ENCODE measurements at regions of chr11 and their contacts with region 1.

Region 1: GRCh38 chr11:1652771-1653540 is 23.4 kb downstream of the KRTAP5-5 start:
- DNase-seq: peak; percentile 72 to 90 (median 88)
- ATAC-seq: peak; percentile 76 to 83
- H3K4me3 ChIP-seq: no peak overlapping the region
- H3K27ac ChIP-seq: no peak overlapping the region
- H3K4me1 ChIP-seq: no peaks in the 10 kb centered on the region
- H3K27me3 ChIP-seq: no peaks in the 10 kb centered on the region

Region 2: DNA sequence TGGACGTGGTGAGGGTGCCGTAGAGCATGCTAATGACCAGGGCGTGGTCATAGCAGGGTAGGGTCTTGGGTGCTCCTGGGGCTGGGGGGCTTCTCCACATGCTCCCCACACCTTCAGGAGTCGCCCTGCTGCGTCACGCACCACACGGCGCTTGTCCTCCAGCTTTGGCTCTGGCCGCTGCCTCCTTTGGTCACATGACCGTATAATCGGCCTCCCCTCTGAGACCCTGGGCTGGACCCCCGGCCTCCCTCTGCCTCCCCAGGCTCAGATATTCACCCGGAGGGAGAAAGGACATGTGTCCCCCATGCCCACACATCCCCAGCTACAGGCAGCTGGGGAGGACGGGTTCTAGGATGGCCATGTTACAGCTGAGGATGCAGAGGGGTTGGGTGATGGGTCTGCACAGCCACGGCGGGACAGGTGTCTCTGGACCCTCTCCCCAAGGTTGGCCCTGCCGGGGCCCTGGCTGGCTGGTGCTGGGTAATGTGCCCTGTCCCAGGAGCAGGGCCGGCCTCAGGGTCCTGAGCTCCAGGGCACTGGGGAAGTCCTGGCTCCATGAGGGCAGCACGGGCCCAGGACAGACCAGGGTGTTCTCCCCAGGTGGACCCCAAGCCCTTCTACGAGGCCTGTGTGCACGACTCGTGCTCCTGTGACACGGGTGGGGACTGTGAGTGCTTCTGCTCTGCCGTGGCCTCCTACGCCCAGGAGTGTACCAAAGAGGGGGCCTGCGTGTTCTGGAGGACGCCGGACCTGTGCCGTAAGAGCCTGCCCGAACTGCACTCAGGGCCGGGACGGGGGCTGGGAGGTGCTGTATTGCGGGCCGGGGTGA is 563.8 kb before region 1 on chr11:
- intact Hi-C with region 1: no loop called
- DNase-seq: peak; percentile 13 to 52 (median 36)
- ATAC-seq: no peak
- H3K4me3 ChIP-seq: no peak overlapping the region
- H3K27ac ChIP-seq: no peak overlapping the region
- H3K4me1 ChIP-seq: no peaks in the 10 kb centered on the region
- H3K27me3 ChIP-seq: no peaks in the 10 kb centered on the region

Region 3: GRCh38 chr11:1694064-1694845 is 41.3 kb after region 1 on chr11:
- intact Hi-C with region 1: loop called in 2 of 4 experiments (anchors 5 kb)
- DNase-seq: peak; percentile 87 to 96 (median 96)
- ATAC-seq: peak; percentile 95
- H3K4me3 ChIP-seq: no peak overlapping the region
- H3K27ac ChIP-seq: no peak overlapping the region
- H3K4me1 ChIP-seq: no peaks in the 10 kb centered on the region
- H3K27me3 ChIP-seq: no peaks in the 10 kb centered on the region

Region 4: GRCh38 chr11:1832211-1832919 is 179.4 kb after region 1 on chr11:
- intact Hi-C with region 1: loop called in 2 of 4 experiments (anchors 5 kb)
- DNase-seq: peak; percentile 56 to 85 (median 84)
- ATAC-seq: peak; percentile 65 to 71
- H3K4me3 ChIP-seq: no peak overlapping the region
- H3K27ac ChIP-seq: no peak overlapping the region
- H3K4me1 ChIP-seq: peaks cover 2% of the 10 kb centered on the region
- H3K27me3 ChIP-seq: no peaks in the 10 kb centered on the region

Region 5: GRCh38 chr11:1837171-1838076 is 184.5 kb after region 1 on chr11:
- intact Hi-C with region 1: loop called in 2 of 4 experiments (anchors 5 kb)
- DNase-seq: peak; percentile 73 to 89 (median 89)
- ATAC-seq: peak; percentile 32 to 55
- H3K4me3 ChIP-seq: no peak overlapping the region
- H3K27ac ChIP-seq: no peak overlapping the region
- H3K4me1 ChIP-seq: no peaks in the 10 kb centered on the region
- H3K27me3 ChIP-seq: no peaks in the 10 kb centered on the region